PC-3 (cell line): ENCODE measurements at regions of chr7 and their contacts with region 1.

Region 1: DNA sequence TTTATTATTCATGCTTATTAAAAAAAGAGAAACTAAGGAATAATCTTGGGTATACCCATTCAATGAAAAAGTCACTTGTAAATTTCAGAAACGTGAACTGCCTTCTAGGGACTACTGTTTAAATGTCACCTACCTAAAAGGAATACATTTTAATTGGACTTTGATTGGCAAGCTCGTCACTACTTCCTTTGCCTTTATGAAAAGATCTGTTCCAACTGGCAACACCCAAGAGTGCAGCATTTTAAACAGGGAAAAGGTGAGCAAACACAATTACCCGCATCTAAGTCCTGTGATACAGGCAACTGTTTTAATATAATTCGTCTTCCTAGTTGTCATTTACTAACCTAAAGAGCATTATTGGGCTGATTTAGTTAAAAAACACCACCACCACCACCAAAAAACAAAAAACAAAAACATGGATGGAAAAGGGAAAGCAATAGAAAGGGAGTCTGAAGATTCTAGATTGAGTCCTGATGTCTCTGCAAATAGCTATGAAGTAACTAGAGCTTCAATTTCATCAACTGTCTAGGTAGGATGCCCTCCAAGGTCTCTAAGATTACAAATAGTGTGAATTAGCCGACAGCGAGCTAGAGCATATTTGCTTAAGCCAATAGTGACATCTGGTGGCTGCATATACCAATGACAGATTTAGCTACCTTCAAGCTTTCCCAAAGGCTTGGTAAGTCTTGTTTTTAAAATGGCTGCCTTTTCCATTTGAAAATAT is 33.8 kb upstream of the ICA1 start:
- DNase-seq: peak; percentile 86
- ATAC-seq: peak; percentile 99
- H3K4me3 ChIP-seq: no peak overlapping the region; the same call in 1 of the 2 replicates
- H3K27ac ChIP-seq: no peak overlapping the region
- H3K4me1 ChIP-seq: no peaks in the 10 kb centered on the region
- H3K27me3 ChIP-seq: no peaks in the 10 kb centered on the region
- CTCF ChIP-seq: peak; percentile 82

Region 2: GRCh38 chr7:7424151-7424873 is 871.5 kb before region 1 on chr7:
- CTCF ChIA-PET with region 1: no interaction called
- POLR2A ChIA-PET with region 1: no interaction called
- intact Hi-C with region 1: loop called (anchors 10 kb)
- DNase-seq: peak; percentile 81
- ATAC-seq: peak; percentile 95
- H3K4me3 ChIP-seq: peak overlapping the region; percentile 65
- H3K27ac ChIP-seq: no peak overlapping the region
- H3K4me1 ChIP-seq: peaks cover 8% of the 10 kb centered on the region; the same call in 1 of the 2 replicates
- H3K27me3 ChIP-seq: no peaks in the 10 kb centered on the region
- CTCF ChIP-seq: peak; percentile 94

Region 3: GRCh38 chr7:7595451-7595850 is 700.3 kb before region 1 on chr7:
- CTCF ChIA-PET with region 1: no interaction called
- POLR2A ChIA-PET with region 1: no interaction called
- intact Hi-C with region 1: loop called (anchors 2 kb)
- DNase-seq: peak; percentile 62
- ATAC-seq: peak; percentile 61
- H3K4me3 ChIP-seq: no peak overlapping the region
- H3K27ac ChIP-seq: no peak overlapping the region
- H3K4me1 ChIP-seq: no peaks in the 10 kb centered on the region
- H3K27me3 ChIP-seq: no peaks in the 10 kb centered on the region
- CTCF ChIP-seq: peak; percentile 63

Region 4: GRCh38 chr7:7662527-7662926 is 633.3 kb before region 1 on chr7:
- CTCF ChIA-PET with region 1: no interaction called
- POLR2A ChIA-PET with region 1: no interaction called
- intact Hi-C with region 1: loop called (anchors 10 kb)
- DNase-seq: peak; percentile 13
- ATAC-seq: no peak; the same call in 1 of the 2 replicates
- H3K4me3 ChIP-seq: no peak overlapping the region
- H3K27ac ChIP-seq: no peak overlapping the region
- H3K4me1 ChIP-seq: no peaks in the 10 kb centered on the region
- H3K27me3 ChIP-seq: no peaks in the 10 kb centered on the region
- CTCF ChIP-seq: peak; percentile 58

Region 5: GRCh38 chr7:8217200-8218068 is 78.4 kb before region 1 on chr7:
- CTCF ChIA-PET with region 1: no interaction called
- POLR2A ChIA-PET with region 1: no interaction called
- intact Hi-C with region 1: loop called (anchors 1 kb)
- DNase-seq: peak; percentile 80
- ATAC-seq: peak; percentile 46
- H3K4me3 ChIP-seq: no peak overlapping the region
- H3K27ac ChIP-seq: no peak overlapping the region
- H3K4me1 ChIP-seq: no peaks in the 10 kb centered on the region
- H3K27me3 ChIP-seq: no peaks in the 10 kb centered on the region
- CTCF ChIP-seq: peak; percentile 75

Region 6: GRCh38 chr7:8277394-8277982 is 18.3 kb before region 1 on chr7:
- CTCF ChIA-PET with region 1: interaction called, 31 read pairs
- POLR2A ChIA-PET with region 1: no interaction called
- intact Hi-C with region 1: loop called (anchors 1 kb)
- DNase-seq: peak; percentile 61
- ATAC-seq: peak; percentile 89
- H3K4me3 ChIP-seq: no peak overlapping the region
- H3K27ac ChIP-seq: no peak overlapping the region
- H3K4me1 ChIP-seq: no peaks in the 10 kb centered on the region
- H3K27me3 ChIP-seq: no peaks in the 10 kb centered on the region
- CTCF ChIP-seq: peak; percentile 65